Activated CD8-positive, alpha-beta T cell treated with anti-CD3 and anti-CD28 coated beads, Interleukin-2, amount 10 ng/mL, durations not matched to agents 7 days and 5 days (primary cell): ENCODE measurements at regions of chr19 and their contacts with region 1.

Region 1: DNA sequence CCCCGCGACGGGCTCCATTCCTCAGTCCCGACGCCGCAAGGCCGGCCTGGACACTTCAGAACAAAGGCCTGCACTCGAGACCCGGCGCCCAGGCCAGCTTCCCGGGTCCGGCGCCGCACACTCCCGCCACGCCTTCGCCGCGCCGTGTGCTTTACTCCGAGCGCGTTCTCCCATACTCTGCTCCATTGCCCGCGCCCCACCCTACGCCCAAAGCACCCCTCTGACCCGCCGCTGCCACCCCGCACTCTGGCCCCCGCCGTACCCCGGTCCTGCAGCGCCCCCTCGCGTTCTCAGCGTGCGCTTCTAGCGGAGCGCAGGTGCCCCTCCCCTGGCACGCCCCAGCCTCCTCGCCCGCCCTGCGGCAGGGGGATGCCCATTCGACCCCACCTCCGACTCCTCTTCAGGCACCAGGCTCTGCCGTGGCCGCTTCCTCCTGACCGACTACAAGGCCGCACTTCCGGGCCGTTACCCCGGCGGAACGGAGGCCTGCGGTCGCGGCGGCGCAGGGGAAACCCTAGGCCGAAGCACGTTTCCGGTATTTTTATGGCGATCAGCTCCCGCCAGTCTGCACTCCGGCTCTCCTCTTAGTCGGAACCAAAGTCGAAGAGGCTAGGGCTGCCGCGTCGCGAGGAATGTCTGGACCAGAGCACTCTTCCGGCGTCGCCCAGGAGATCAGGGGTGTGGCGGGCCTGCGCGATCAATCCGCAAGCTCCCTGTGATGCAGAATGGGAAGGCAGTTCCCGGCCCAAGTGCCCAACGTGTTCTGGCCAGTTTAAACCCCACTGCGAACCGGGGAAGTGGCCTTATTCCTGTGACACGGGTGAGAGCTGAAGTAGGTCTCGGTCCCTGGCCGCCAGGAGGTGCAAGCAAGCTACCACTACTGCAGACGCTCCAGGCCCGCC is at the start of gene ZBTB45:
- DNase-seq: peak; percentile 93
- ATAC-seq: peak; percentile 88
- H3K4me3 Mint-ChIP-seq: peak within 1 kb of the TSS; percentile 96
- H3K27ac Mint-ChIP-seq: peak within 1 kb of the TSS; percentile 97
- H3K4me1 Mint-ChIP-seq: peaks cover 41% of the 10 kb centered on the region
- H3K27me3 Mint-ChIP-seq: no peaks in the 10 kb centered on the region
- total RNA-seq, gene ZBTB45: 13.9 to 16.7 TPM

Region 2: DNA sequence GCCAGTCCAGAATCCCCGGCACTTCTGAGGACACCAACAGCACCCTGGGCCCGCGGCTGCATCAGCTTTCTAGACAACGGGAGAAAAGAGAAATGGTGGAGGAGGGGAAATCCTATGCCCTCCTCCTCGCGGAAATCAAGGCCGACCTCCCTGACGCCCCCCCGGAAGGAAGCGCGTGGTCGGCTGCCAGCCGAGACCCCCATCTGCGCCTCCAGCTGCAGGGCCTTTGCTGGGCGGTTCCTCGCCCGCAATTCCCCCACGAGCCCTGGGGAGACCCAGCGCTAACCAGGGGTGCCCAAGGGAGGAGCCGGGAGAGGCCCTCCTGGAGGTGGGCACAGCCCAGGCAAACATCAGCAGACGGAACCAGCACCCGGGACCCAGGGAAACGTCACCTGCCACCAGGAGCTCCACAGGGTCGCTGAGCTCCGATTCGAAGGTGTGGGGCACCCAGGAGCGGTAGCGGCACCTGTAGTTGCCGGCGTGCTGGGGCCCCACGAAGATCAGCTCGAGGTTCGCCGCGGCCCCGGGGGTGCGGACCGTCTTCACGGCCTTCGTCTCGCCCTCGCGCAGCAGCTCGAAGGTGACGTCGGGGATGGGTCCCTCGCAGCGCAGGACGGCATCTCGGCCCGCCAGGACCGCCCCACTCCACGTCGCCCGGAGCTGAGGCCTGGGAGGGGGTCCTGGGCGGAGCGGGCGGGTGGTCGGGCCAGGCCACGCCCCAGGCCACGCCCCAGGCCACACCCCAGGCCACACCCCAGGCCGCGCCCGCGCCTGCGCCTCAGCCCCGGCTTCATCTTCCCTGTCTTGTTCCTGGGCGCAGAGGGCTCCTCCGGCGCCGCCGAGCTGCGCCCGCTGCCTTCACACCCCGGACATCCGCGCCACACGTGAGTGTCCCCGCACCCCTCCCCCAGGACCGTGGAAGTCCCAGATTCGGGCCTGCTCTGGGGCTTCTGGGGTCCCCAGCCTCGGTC is 172.4 kb before region 1 on chr19:
- CTCF ChIA-PET with region 1: interaction called, 13 read pairs
- POLR2A ChIA-PET with region 1: no interaction called
- DNase-seq: peak; percentile 80
- ATAC-seq: peak; percentile 93
- H3K4me3 Mint-ChIP-seq: peak overlapping the region; percentile 95
- H3K27ac Mint-ChIP-seq: peak overlapping the region; percentile 87
- H3K4me1 Mint-ChIP-seq: peaks cover 31% of the 10 kb centered on the region
- H3K27me3 Mint-ChIP-seq: no peaks in the 10 kb centered on the region

Region 3: GRCh38 chr19:58475714-58476497 is 43.7 kb before region 1 on chr19 and contains the start of gene ZNF446:
- CTCF ChIA-PET with region 1: interaction called, 11 read pairs
- POLR2A ChIA-PET with region 1: interaction called, 3 read pairs
- DNase-seq: peak; percentile 99
- ATAC-seq: peak; percentile 92
- H3K4me3 Mint-ChIP-seq: peak within 1 kb of the TSS; percentile 91
- H3K27ac Mint-ChIP-seq: peak within 1 kb of the TSS; percentile 100
- H3K4me1 Mint-ChIP-seq: peaks cover 26% of the 10 kb centered on the region
- H3K27me3 Mint-ChIP-seq: no peaks in the 10 kb centered on the region
- total RNA-seq, gene ZNF446: 6.9 to 7.8 TPM

Region 4: GRCh38 chr19:58538257-58539168 is 18.9 kb after region 1 on chr19:
- CTCF ChIA-PET with region 1: interaction called, 49 read pairs
- POLR2A ChIA-PET with region 1: interaction called, 28 read pairs
- DNase-seq: peak; percentile 71
- ATAC-seq: peak; percentile 84
- H3K4me3 Mint-ChIP-seq: peak overlapping the region; percentile 68
- H3K27ac Mint-ChIP-seq: peak overlapping the region; percentile 67
- H3K4me1 Mint-ChIP-seq: peaks cover 14% of the 10 kb centered on the region
- H3K27me3 Mint-ChIP-seq: peaks cover 20% of the 10 kb centered on the region

Region 5: GRCh38 chr19:58558623-58559274 is 39.1 kb after region 1 on chr19:
- CTCF ChIA-PET with region 1: interaction called, 49 read pairs
- POLR2A ChIA-PET with region 1: interaction called, 31 read pairs
- DNase-seq: peak; percentile 100
- ATAC-seq: peak; percentile 67
- H3K4me3 Mint-ChIP-seq: peak overlapping the region; percentile 96
- H3K27ac Mint-ChIP-seq: peak overlapping the region; percentile 99
- H3K4me1 Mint-ChIP-seq: peaks cover 69% of the 10 kb centered on the region
- H3K27me3 Mint-ChIP-seq: no peaks in the 10 kb centered on the region

Region 6: DNA sequence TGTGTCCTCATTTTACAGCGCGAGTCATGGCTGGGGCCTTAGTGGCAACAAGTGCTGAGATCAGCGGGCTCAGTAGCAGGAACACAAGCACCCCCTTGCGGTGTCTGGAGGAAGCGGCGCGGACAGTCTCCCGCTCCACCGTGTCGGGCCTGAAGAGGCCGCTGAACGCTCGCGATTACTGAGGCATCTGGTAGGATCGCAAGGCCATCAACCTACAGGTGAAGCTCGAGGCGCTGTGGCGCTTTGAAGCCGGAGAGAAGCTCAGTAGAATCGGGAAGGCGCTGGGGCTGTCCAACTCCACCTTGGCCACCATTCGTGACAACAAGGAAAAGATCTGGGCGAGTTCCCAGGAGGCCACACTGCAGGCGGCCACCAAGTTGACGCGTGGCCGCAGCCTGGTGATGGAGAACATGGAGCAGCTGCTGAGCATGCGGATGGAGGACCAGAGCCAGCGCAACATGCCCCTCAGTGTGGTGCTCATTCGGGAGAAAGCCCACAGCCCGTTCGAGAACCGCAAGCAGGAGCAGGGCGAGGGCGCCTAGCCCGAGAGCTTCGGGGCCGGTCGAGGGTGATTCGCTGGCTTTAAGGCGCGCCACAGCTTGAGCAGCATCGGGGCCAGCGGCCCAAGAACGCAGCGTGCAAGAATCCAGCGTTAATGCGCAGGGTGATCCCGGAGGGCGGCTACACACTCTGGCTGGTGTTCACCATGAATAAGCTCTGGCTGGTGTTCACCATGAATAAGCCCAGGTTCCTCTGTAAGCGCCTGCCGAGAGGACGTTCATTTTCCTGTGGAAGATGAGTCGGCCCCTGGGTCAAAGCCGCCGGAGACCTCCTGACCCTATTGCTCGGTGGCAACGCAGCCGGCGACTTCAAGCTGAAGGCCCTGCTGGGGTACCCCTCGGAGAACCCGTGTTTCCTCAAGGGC is 61.9 kb after region 1 on chr19:
- CTCF ChIA-PET with region 1: interaction called, 94 read pairs
- POLR2A ChIA-PET with region 1: interaction called, 17 read pairs
- DNase-seq: peak; percentile 95
- ATAC-seq: peak; percentile 94
- H3K4me3 Mint-ChIP-seq: no peak overlapping the region
- H3K27ac Mint-ChIP-seq: peak overlapping the region; percentile 79
- H3K4me1 Mint-ChIP-seq: peaks cover 21% of the 10 kb centered on the region
- H3K27me3 Mint-ChIP-seq: no peaks in the 10 kb centered on the region